Mucosa of descending colon (tissue), 3 donors: ENCODE measurements at regions of chr4 and their contacts with region 1.

Region 1: GRCh38 chr4:166594326-166594946 is 639.9 kb downstream of the SPOCK3 start:
- DNase-seq: peak in 2 of 3 donors; percentile 40 to 59
- ATAC-seq: peak; percentile 79
- H3K4me3 ChIP-seq: no peak overlapping the region
- H3K4me1 ChIP-seq: no peaks in the 10 kb centered on the region
- CTCF ChIP-seq: no peak

Region 2: GRCh38 chr4:166165829-166166420 is 428.5 kb before region 1 on chr4:
- intact Hi-C with region 1: loop called in 1 of 2 experiments (anchors 10 kb)
- DNase-seq: peak in 1 of 3 donors; percentile 27
- ATAC-seq: peak; percentile 74
- H3K4me3 ChIP-seq: no peak overlapping the region
- H3K4me1 ChIP-seq: no peaks in the 10 kb centered on the region
- CTCF ChIP-seq: peak; percentile 61

Region 3: GRCh38 chr4:166341992-166342391 is 252.4 kb before region 1 on chr4:
- intact Hi-C with region 1: no loop called
- DNase-seq: no peak
- ATAC-seq: no peak
- H3K4me3 ChIP-seq: no peak overlapping the region
- H3K4me1 ChIP-seq: no peaks in the 10 kb centered on the region
- CTCF ChIP-seq: no peak

Region 4: GRCh38 chr4:166481055-166481454 is 113.4 kb before region 1 on chr4:
- intact Hi-C with region 1: no loop called
- DNase-seq: no peak
- ATAC-seq: no peak
- H3K4me3 ChIP-seq: no peak overlapping the region
- H3K4me1 ChIP-seq: no peaks in the 10 kb centered on the region
- CTCF ChIP-seq: no peak